Endothelial cell of umbilical vein (primary cell): ENCODE measurements at regions of chr2 and their contacts with region 1.

Region 1: GRCh38 chr2:201621293-201621999 is 21.9 kb downstream of the TMEM237 start:
- DNase-seq: peak; percentile 89
- H3K4me3 ChIP-seq: peak overlapping the region in 1 of 3 experiments; percentile 20
- H3K27ac ChIP-seq: peak overlapping the region; percentile 74
- H3K4me1 ChIP-seq: peaks cover 26% of the 10 kb centered on the region
- H3K27me3 ChIP-seq: no peaks in the 10 kb centered on the region
- CTCF ChIP-seq: no peak
- POLR2A ChIP-seq: peak; percentile 61

Region 2: DNA sequence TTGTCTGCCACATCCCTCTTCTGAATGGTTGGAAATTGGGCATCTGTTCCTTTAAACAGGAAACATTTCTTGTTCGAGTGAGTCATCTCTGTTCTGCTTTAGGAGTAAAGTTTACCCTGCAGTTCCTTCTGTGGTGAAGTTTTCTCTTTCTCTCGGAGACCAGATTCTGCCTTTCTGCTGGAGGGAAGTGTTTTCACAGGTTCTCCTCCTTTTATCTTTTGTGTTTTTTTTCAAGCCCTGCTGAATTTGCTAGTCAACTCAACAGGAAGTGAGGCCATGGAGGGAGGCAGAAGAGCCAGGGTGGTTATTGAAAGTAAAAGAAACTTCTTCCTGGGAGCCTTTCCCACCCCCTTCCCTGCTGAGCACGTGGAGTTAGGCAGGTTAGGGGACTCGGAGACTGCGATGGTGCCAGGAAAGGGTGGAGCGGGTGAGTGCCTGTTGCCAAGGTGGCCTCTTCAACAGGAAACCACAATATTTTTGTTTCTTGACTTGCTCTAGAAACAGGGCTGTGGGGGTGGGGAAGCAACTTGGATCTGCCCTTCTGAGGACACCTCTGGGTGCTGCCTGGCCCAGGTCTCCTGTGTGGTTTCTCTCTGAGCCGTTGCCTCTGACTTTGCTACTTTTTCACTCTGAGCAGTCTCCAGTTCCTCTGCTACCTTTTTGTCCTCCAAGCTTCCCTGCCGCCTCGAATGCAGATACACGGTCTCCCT is 363.3 kb before region 1 on chr2:
- CTCF ChIA-PET with region 1: no interaction called
- POLR2A ChIA-PET with region 1: no interaction called
- dilution Hi-C with region 1: no loop called
- intact Hi-C with region 1: loop called (anchors 5 kb)
- DNase-seq: peak; percentile 84
- H3K4me3 ChIP-seq: peak overlapping the region; percentile 43 to 80 (median 78)
- H3K27ac ChIP-seq: peak overlapping the region; percentile 98
- H3K4me1 ChIP-seq: peaks cover 30% of the 10 kb centered on the region
- H3K27me3 ChIP-seq: no peaks in the 10 kb centered on the region
- CTCF ChIP-seq: no peak
- POLR2A ChIP-seq: peak; percentile 31

Region 3: DNA sequence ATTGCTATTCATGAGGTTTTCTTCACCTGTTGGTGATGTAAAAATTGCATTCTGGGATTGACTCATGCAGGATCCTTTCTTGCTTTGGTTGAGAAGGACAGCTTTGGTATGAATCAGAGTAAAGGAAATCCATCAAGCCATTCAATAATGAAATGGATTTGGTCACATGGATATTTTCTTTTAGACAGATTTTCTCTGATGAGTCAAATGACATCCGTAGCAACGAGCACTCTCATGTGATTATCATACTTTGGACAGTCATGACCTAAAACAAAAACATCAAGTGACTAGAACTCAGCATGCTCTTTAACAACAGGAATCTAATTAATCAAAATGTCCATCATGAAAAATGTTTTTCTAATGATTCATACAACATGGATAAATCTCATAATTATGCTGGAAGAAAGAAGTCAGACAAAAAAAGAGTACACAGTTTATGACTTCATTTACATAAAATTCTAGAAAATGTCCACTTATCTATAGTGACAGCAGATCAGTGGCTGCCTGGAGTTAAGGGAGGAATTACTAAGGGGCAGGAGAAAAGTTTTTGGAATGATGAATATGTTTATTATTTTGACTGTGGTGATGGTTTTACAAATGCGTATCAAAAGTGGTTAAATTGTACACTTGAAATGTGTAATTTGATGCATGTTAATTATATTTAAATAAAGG is 200.9 kb before region 1 on chr2:
- CTCF ChIA-PET with region 1: no interaction called
- POLR2A ChIA-PET with region 1: no interaction called
- dilution Hi-C with region 1: no loop called
- intact Hi-C with region 1: loop called (anchors 5 kb)
- DNase-seq: peak; percentile 91
- H3K4me3 ChIP-seq: no peak overlapping the region
- H3K27ac ChIP-seq: peak overlapping the region; percentile 51
- H3K4me1 ChIP-seq: peaks cover 42% of the 10 kb centered on the region
- H3K27me3 ChIP-seq: no peaks in the 10 kb centered on the region
- CTCF ChIP-seq: no peak
- POLR2A ChIP-seq: no peak